ENCODE measurements at regions of chr10 and their contacts with region 1.

Region 1: GRCh38 chr10:60810809-60811182 is 32.5 kb downstream of the CDK1 start:
- DNase-seq: no peak
- ATAC-seq: no peak
- H3K4me3 ChIP-seq: no peak overlapping the region
- H3K27ac ChIP-seq: no peak overlapping the region
- H3K4me1 ChIP-seq: no peaks in the 10 kb centered on the region
- H3K27me3 ChIP-seq: no peaks in the 10 kb centered on the region
- CTCF ChIP-seq: no peak
- EP300 ChIP-seq: no peak
- POLR2A ChIP-seq: no peak
- RAD21 ChIP-seq: no peak

Region 2: DNA sequence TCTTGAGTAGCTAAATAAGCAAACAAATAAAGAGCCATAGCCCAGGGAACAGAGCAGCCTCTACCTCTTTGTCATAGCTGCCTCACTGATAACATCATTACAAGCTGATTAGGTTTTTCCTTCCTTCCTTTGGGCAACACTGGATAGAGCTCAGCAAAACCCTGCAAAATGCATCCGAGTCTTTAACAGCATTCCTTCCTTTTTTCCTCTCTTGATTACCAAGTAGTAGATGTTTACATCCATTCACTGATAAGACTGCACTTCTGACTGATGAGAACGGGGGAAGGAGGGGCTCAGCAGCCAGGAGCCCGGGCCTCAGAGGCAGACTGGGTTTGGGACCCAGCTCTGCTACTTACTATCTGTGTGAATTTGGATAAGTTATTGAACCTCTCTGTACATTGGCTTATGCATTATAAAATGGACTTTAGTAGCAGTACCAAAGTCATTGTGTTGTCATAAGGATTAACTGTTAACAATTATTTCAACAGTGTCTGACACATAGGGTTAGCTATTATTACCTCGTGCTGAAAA is 635.3 kb before region 1 on chr10:
- CTCF ChIA-PET with region 1: no interaction called
- POLR2A ChIA-PET with region 1: no interaction called
- in situ Hi-C with region 1: no loop called
- intact Hi-C with region 1: no loop called
- DNase-seq: peak in 1 of 4 experiments; percentile 8
- ATAC-seq: peak; percentile 73
- H3K4me3 ChIP-seq: no peak overlapping the region
- H3K27ac ChIP-seq: no peak overlapping the region
- H3K4me1 ChIP-seq: peaks cover 3 to 5% of the 10 kb centered on the region in 2 experiments; a peak in 3 of 5 replicates
- H3K27me3 ChIP-seq: no peaks in the 10 kb centered on the region
- CTCF ChIP-seq: no peak
- EP300 ChIP-seq: no peak
- POLR2A ChIP-seq: no peak
- RAD21 ChIP-seq: no peak

Region 3: DNA sequence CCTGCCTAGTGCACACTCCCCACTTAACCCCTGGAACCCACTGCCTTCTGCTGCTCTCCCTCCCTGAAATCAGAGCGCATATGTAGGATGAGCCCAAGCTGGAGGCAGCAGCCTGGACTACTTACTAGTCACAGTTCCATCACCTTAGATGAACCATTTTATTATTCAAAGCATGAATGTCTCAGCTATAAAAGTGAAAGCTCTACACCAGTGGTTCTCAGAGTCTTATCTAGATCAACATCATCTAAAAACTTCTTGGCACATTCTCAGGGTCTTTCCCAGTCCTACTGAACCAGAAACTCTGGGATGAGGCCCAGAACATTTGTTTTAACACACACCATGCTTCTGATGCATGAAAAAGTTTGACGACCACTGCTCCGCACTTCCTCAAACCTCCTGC is 320.8 kb before region 1 on chr10:
- CTCF ChIA-PET with region 1: no interaction called
- POLR2A ChIA-PET with region 1: no interaction called
- in situ Hi-C with region 1: no loop called
- intact Hi-C with region 1: no loop called
- DNase-seq: no peak
- ATAC-seq: no peak
- H3K4me3 ChIP-seq: no peak overlapping the region
- H3K27ac ChIP-seq: no peak overlapping the region
- H3K4me1 ChIP-seq: no peaks in the 10 kb centered on the region
- H3K27me3 ChIP-seq: no peaks in the 10 kb centered on the region; a peak in 1 of 5 replicates
- CTCF ChIP-seq: no peak
- EP300 ChIP-seq: no peak
- POLR2A ChIP-seq: no peak
- RAD21 ChIP-seq: no peak

Region 4: DNA sequence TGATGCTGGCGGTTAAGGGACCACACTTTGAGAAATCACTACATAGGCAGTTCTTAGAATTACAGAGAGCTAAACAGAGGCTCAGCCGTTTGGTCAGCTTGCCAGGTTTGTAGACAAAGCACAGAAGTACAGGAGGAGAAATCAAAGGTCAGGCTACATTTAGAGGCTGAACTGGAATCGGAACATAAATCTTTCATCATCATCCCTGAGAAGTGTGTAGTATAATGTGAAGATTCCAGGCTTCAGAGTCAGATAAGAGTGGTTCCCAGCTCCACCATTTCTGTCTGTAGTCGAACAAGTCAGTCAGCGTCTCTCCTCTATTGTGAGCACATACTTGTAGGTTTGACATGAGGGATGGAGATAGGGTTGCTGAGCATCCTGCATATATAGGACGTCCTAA is 13.6 kb before region 1 on chr10:
- CTCF ChIA-PET with region 1: no interaction called
- POLR2A ChIA-PET with region 1: interaction called, 15 read pairs
- in situ Hi-C with region 1: no loop called
- intact Hi-C with region 1: no loop called
- DNase-seq: no peak
- ATAC-seq: peak; percentile 49
- H3K4me3 ChIP-seq: no peak overlapping the region
- H3K27ac ChIP-seq: no peak overlapping the region
- H3K4me1 ChIP-seq: no peaks in the 10 kb centered on the region
- H3K27me3 ChIP-seq: no peaks in the 10 kb centered on the region
- CTCF ChIP-seq: no peak
- EP300 ChIP-seq: no peak
- POLR2A ChIP-seq: 0 out of 2 replicates have a peak, but pooled peaks have one; percentile 17
- RAD21 ChIP-seq: no peak

Region 5: DNA sequence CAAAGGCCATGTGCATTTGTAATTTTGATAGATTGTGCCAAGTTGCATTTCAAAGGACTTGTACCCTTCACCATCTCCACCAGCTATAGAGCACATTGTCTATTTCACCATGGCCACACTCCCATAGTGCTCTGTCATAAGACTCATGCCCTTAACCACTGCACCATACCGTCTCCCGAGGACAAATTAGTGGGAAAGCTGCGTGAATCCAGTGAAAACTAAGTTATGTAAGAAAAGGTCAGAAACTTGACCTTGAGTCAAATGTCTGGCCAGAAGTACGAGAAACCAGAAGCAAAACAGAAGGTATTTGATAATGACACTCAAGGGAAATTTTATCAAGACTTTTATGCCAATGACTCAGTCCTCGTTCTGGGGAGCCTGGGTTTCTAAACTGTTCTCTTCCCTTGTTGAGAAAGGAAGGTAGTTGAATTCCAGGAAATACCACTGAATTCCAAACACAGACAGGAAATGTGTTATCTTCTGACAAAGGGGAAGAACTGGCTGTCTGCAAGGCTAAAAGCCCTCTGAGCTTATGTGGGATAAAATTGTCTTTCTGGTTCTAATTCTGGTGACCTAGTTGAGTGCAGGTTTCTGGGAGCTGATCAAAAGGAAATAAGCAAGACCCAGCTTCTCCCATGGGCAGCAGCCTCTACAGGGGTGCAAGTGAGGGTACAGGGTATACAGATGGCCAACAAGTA is 17.1 kb after region 1 on chr10:
- CTCF ChIA-PET with region 1: no interaction called
- POLR2A ChIA-PET with region 1: no interaction called
- in situ Hi-C with region 1: no loop called
- intact Hi-C with region 1: no loop called
- DNase-seq: peak in 2 of 4 experiments; percentile 75 to 89
- ATAC-seq: peak; percentile 72
- H3K4me3 ChIP-seq: no peak overlapping the region
- H3K27ac ChIP-seq: peak overlapping the region; percentile 74
- H3K4me1 ChIP-seq: peaks cover 0 to 19% of the 10 kb centered on the region in 2 experiments; a peak in 4 of 5 replicates
- H3K27me3 ChIP-seq: no peaks in the 10 kb centered on the region
- CTCF ChIP-seq: no peak
- EP300 ChIP-seq: peak; percentile 87
- POLR2A ChIP-seq: no peak
- RAD21 ChIP-seq: peak in 1 of 2 experiments; percentile 25; a peak in 2 of 4 replicates

Region 6: GRCh38 chr10:60944159-60944909 is 133.5 kb after region 1 on chr10 and contains the start of gene RHOBTB1:
- CTCF ChIA-PET with region 1: no interaction called
- POLR2A ChIA-PET with region 1: no interaction called
- in situ Hi-C with region 1: no loop called
- intact Hi-C with region 1: no loop called
- DNase-seq: peak; percentile 73 to 83 (median 78)
- ATAC-seq: peak; percentile 84
- H3K4me3 ChIP-seq: peak within 1 kb of the TSS; percentile 67
- H3K27ac ChIP-seq: peak within 1 kb of the TSS; percentile 87
- H3K4me1 ChIP-seq: peaks cover 15 to 23% of the 10 kb centered on the region in 2 experiments; a peak in 4 of 5 replicates
- H3K27me3 ChIP-seq: no peaks in the 10 kb centered on the region
- CTCF ChIP-seq: 0 out of 6 replicates have a peak, but pooled peaks of 1 of the 3 experiments have one; percentile 1
- EP300 ChIP-seq: no peak
- POLR2A ChIP-seq: peak; percentile 74
- RAD21 ChIP-seq: no peak
- polyA plus RNA-seq, gene RHOBTB1: 1.7 to 3.8 TPM

Region 7: GRCh38 chr10:61135276-61135721 is 324.5 kb after region 1 on chr10:
- CTCF ChIA-PET with region 1: no interaction called
- POLR2A ChIA-PET with region 1: no interaction called
- in situ Hi-C with region 1: no loop called
- intact Hi-C with region 1: loop called (anchors 2 kb)
- DNase-seq: no peak
- ATAC-seq: no peak
- H3K4me3 ChIP-seq: no peak overlapping the region
- H3K27ac ChIP-seq: no peak overlapping the region
- H3K4me1 ChIP-seq: no peaks in the 10 kb centered on the region
- H3K27me3 ChIP-seq: no peaks in the 10 kb centered on the region
- CTCF ChIP-seq: no peak
- EP300 ChIP-seq: no peak
- POLR2A ChIP-seq: no peak
- RAD21 ChIP-seq: no peak

Measured in K562 (cell line).